Activated naive CD4-positive, alpha-beta T cell treated with anti-CD3 and anti-CD28 coated beads for 36 hours (primary cell): ENCODE measurements at regions of chr2 and their contacts with region 1.

Region 1: GRCh38 chr2:96265840-96266679 is at the starts of genes CIAO1 and TMEM127:
- DNase-seq: peak; percentile 99
- H3K4me3 Mint-ChIP-seq: peak within 1 kb of the TSS; percentile 99
- H3K27ac Mint-ChIP-seq: peak within 1 kb of the TSS; percentile 86
- H3K4me1 Mint-ChIP-seq: peaks cover 47% of the 10 kb centered on the region
- H3K27me3 Mint-ChIP-seq: no peaks in the 10 kb centered on the region
- total RNA-seq, gene CIAO1: 59.9 to 62.2 TPM
- total RNA-seq, gene TMEM127: 12.9 to 16.1 TPM

Region 2: GRCh38 chr2:96116879-96117697 is 149.0 kb before region 1 on chr2:
- CTCF ChIA-PET with region 1: no interaction called
- intact Hi-C with region 1: loop called (anchors 2 kb)
- DNase-seq: peak; percentile 54
- H3K4me3 Mint-ChIP-seq: peak overlapping the region; percentile 72
- H3K27ac Mint-ChIP-seq: no peak overlapping the region
- H3K4me1 Mint-ChIP-seq: peaks cover 8% of the 10 kb centered on the region
- H3K27me3 Mint-ChIP-seq: peaks cover 33% of the 10 kb centered on the region

Region 3: DNA sequence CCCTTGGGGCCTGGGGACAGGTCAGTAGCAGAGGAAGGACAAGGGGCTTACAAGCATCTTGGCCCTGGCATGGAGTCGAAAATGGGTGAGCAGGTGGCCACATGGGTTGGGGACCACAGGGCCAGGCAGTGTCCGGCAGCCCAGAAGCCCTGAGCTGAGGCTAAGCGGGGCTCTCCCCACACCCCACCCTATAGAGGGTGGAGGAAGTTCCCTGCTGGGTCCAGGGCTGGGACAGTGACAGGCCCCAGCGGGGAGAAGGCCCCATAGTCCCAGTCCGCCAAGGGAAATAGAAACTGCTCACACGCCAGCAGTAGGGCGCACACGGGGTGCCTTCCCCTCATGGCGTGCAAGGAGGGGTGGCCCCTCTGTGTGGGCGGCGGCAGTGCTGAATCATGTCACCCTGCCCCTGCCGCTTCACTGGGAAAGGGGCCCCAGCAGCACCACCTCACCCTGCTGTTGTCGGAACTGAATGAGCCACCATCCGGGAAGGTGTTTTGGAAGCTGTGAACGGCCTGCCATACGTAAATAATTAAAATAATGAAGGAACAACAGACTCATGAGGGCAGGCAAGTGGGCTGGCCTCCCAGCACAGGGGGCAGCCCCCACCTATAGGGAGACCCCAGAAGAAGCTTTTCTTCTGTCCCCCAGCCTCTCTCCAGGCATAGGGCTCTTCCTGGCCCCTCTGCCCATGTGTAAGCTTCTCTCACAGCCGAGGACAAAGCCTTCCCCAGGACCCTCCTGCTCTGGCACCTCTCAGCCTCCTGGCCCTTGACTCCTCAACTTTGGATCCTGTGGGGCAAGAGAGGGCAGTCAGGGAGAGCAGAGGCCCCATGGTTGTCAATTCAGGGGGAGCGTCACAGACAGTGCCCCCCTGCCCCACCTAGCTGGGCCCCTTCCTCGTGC is 108.2 kb before region 1 on chr2:
- CTCF ChIA-PET with region 1: no interaction called
- intact Hi-C with region 1: loop called (anchors 1 kb)
- DNase-seq: peak; percentile 99
- H3K4me3 Mint-ChIP-seq: peak overlapping the region; percentile 75
- H3K27ac Mint-ChIP-seq: peak overlapping the region; percentile 95
- H3K4me1 Mint-ChIP-seq: peaks cover 85% of the 10 kb centered on the region
- H3K27me3 Mint-ChIP-seq: no peaks in the 10 kb centered on the region

Region 4: GRCh38 chr2:96208143-96209010 is 57.7 kb before region 1 on chr2 and contains the start of gene STARD7:
- CTCF ChIA-PET with region 1: interaction called, 11 read pairs
- intact Hi-C with region 1: loop called (anchors 1 kb)
- DNase-seq: peak; percentile 98
- H3K4me3 Mint-ChIP-seq: peak within 1 kb of the TSS; percentile 92
- H3K27ac Mint-ChIP-seq: peak within 1 kb of the TSS; percentile 88
- H3K4me1 Mint-ChIP-seq: peaks cover 48% of the 10 kb centered on the region
- H3K27me3 Mint-ChIP-seq: no peaks in the 10 kb centered on the region
- total RNA-seq, gene STARD7: 84.7 to 87.6 TPM

Region 5: DNA sequence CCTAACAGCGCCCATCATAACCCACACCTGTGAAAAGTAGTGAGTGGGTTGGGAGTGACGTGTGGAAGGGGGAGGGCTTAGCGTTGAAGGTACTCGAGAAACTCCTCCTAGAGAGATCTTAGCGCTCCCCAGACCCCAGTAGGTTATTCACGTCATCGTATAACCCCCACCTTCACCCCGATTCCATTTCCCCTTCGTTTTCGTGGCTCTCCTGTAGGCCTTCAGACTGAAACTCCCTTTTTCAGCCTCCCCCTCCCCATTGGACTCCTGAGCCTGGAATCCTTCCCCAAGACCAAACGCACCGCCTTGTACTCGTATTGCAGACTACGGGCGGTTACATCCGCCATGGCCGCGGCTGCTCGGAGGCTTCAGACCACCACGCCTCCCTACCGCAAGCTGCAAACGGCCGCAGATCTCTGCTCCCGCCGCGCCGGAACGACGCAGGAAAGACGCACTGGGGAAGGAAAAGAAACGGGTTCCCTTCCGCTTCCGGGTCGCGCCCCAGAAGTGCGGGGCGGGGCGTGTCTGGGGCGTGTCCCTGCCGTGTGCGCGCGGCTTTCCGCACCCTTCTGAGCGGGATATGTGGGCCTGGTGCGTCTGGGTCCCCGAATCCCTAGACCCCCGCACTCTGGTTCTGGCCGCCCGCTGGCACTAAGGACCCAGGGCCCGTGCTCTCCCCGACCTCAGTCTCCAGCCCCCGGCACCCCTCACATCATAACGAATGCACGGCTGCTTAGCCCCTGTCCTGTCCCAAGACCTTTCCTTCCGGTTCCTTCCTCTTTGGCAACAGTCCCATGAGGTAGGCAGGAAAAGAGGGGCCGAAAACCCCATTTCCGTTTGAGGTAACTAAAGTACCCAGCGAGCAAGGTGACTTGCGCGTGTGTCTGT is 39.3 kb after region 1 on chr2 and contains the start of gene SNRNP200:
- CTCF ChIA-PET with region 1: interaction called, 3 read pairs
- intact Hi-C with region 1: loop called (anchors 1 kb)
- DNase-seq: peak; percentile 92
- H3K4me3 Mint-ChIP-seq: peak within 1 kb of the TSS; percentile 100
- H3K27ac Mint-ChIP-seq: peak within 1 kb of the TSS; percentile 98
- H3K4me1 Mint-ChIP-seq: peaks cover 49% of the 10 kb centered on the region
- H3K27me3 Mint-ChIP-seq: no peaks in the 10 kb centered on the region
- total RNA-seq, gene SNRNP200: 179 to 181 TPM

Region 6: GRCh38 chr2:96336104-96336775 is 70.2 kb after region 1 on chr2:
- CTCF ChIA-PET with region 1: interaction called, 4 read pairs
- intact Hi-C with region 1: loop called (anchors 2 kb)
- DNase-seq: no peak
- H3K4me3 Mint-ChIP-seq: peak overlapping the region; percentile 87
- H3K27ac Mint-ChIP-seq: peak overlapping the region; percentile 72
- H3K4me1 Mint-ChIP-seq: peaks cover 51% of the 10 kb centered on the region
- H3K27me3 Mint-ChIP-seq: no peaks in the 10 kb centered on the region

Region 7: DNA sequence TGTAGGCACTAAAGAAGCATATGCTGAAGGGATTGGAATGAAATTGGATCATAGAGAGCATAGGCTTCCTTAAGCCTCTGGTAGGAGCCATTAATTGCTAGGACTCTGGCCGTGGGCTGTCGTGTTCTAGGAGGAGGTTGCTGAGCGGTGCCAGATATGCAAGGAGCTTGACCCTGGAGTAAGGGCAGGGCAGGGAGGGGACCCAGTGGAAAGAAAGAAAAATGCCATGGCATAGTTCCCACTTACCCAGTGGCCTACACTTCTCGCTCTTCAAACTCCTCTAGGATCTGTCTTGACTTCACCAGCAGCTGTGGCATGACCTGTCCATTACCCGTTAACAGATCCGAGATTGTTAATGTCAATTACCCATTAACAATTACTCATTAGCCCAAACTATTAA is 186.0 kb after region 1 on chr2:
- CTCF ChIA-PET with region 1: no interaction called
- intact Hi-C with region 1: no loop called
- DNase-seq: no peak
- H3K4me3 Mint-ChIP-seq: no peak overlapping the region
- H3K27ac Mint-ChIP-seq: no peak overlapping the region
- H3K4me1 Mint-ChIP-seq: no peaks in the 10 kb centered on the region
- H3K27me3 Mint-ChIP-seq: no peaks in the 10 kb centered on the region

Region 8: GRCh38 chr2:96536445-96537065 is 270.5 kb after region 1 on chr2 and contains the start of gene ARID5A:
- CTCF ChIA-PET with region 1: no interaction called
- intact Hi-C with region 1: loop called (anchors 5 kb)
- DNase-seq: peak; percentile 96
- H3K4me3 Mint-ChIP-seq: peak within 1 kb of the TSS; percentile 96
- H3K27ac Mint-ChIP-seq: peak within 1 kb of the TSS; percentile 99
- H3K4me1 Mint-ChIP-seq: peaks cover 60% of the 10 kb centered on the region
- H3K27me3 Mint-ChIP-seq: no peaks in the 10 kb centered on the region
- total RNA-seq, gene ARID5A: 349 to 351 TPM